H1 (cell line): ENCODE measurements at regions of chr9 and their contacts with region 1.

Region 1: GRCh38 chr9:95127249-95128176 is 190.0 kb downstream of the FANCC start:
- DNase-seq: peak in 1 of 2 experiments; percentile 93
- H3K4me3 ChIP-seq: peak overlapping the region; percentile 12 to 58 (median 40); a peak in 7 of 8 replicates
- H3K27ac ChIP-seq: no peak overlapping the region
- H3K4me1 ChIP-seq: peaks cover 5 to 28% (median 14%) of the 10 kb centered on the region in 4 experiments
- H3K27me3 ChIP-seq: no peaks in the 10 kb centered on the region
- CTCF ChIP-seq: peak; percentile 93 to 99 (median 97)
- EP300 ChIP-seq: no peak
- POLR2A ChIP-seq: no peak
- RAD21 ChIP-seq: peak; percentile 76 to 84

Region 2: DNA sequence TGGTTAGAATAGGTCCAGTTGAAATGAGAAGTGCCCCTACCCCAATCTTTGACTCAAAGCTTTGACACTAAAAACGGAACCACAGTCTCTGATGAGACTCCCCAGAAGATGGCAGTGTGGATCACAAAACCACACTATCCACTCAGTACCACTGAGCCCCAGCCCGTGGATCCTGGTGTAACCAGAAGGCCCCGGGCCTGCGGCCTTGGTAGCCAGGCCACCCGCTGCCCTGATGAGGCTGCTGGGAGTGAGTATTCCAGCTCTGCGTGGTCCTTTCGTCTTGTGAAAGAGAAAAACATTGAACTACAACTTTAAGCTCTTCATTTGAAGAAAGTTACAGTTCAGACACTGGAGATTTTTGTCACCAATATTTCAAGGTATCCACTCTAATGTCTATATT is 446.0 kb before region 1 on chr9:
- CTCF ChIA-PET with region 1: interaction called, 25 read pairs
- POLR2A ChIA-PET with region 1: no interaction called
- DNase-seq: peak; percentile 19 to 63
- H3K4me3 ChIP-seq: no peak overlapping the region
- H3K27ac ChIP-seq: no peak overlapping the region
- H3K4me1 ChIP-seq: no peaks in the 10 kb centered on the region; a peak in 1 of 7 replicates
- H3K27me3 ChIP-seq: no peaks in the 10 kb centered on the region; a peak in 1 of 7 replicates
- CTCF ChIP-seq: peak; percentile 25 to 74 (median 66)
- EP300 ChIP-seq: no peak
- POLR2A ChIP-seq: no peak
- RAD21 ChIP-seq: peak; percentile 82 to 88

Region 3: DNA sequence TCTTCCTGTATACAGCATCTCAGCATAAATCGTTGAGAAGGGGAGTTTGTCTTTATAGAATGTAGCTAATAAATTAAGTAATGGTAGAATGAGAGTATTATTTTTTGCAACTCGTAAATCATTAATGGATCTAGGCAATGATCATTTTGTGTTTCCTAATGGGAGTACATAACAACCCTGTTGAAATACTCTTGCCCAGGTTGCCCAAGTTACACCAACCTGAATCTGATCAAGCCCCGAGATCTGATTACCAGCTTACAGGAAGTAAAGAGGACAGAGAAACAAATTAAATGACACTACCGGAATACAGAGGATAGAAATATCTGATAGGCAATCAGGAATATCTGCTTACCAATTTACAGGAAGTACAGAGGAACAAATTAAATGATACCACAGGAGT is 293.7 kb before region 1 on chr9:
- CTCF ChIA-PET with region 1: no interaction called
- POLR2A ChIA-PET with region 1: no interaction called
- DNase-seq: no peak
- H3K4me3 ChIP-seq: no peak overlapping the region
- H3K27ac ChIP-seq: no peak overlapping the region
- H3K4me1 ChIP-seq: no peaks in the 10 kb centered on the region
- H3K27me3 ChIP-seq: no peaks in the 10 kb centered on the region
- CTCF ChIP-seq: no peak
- EP300 ChIP-seq: no peak
- POLR2A ChIP-seq: no peak
- RAD21 ChIP-seq: no peak

Region 4: DNA sequence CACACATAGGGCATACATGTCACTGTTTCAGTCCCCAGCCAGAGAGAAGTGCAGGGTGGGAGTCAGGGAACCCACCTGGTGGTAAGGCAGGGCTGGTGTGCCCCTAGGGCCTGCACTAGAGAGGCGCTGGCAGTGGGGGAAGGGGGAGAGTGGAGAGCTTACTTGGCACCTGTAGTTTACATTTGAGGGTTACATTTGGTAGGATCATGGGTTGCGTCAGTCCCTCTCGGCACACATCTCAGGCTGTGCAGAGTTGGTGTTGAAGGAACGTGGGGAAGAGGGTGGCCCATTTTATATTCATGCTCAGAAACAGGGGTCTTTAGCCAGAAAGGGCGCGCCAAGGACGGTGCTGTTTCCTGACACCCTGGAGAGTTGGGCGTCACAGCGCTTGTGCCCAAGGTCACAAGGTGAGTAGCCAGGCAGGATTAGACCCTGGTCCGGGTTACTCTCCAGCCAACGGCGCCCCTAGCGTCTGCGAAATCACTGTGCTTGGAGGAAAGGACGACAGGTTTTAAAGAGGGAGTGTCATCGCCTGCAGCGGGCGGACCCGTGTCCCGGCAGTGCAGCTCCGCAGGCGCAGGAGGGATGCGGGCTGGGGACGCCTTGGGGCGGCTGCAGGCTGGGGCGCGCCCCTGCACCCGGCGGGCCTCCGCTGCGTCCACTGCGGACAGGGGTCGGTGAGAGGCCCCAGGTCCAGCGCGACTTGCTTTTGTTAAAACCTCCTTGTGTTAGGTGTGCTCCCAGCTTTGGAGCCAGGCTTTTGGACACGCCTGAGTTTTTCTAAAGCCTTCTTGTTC is 82.6 kb before region 1 on chr9:
- CTCF ChIA-PET with region 1: interaction called, 16 read pairs
- POLR2A ChIA-PET with region 1: interaction called, 3 read pairs
- DNase-seq: peak; percentile 72 to 89
- H3K4me3 ChIP-seq: peak overlapping the region in 3 of 4 experiments; percentile 29 to 52 (median 41); a peak in 5 of 8 replicates
- H3K27ac ChIP-seq: no peak overlapping the region
- H3K4me1 ChIP-seq: peaks cover 6 to 20% (median 12%) of the 10 kb centered on the region in 4 experiments
- H3K27me3 ChIP-seq: peaks cover 0 to 20% (median 8%) of the 10 kb centered on the region in 4 experiments; a peak in 6 of 7 replicates
- CTCF ChIP-seq: peak; percentile 83 to 94 (median 92)
- EP300 ChIP-seq: 0 out of 3 replicates have a peak, but pooled peaks of 1 of the 2 experiments have one; percentile 34
- POLR2A ChIP-seq: no peak
- RAD21 ChIP-seq: peak; percentile 85 to 91

Region 5: GRCh38 chr9:95092262-95093072 is 35.0 kb before region 1 on chr9:
- CTCF ChIA-PET with region 1: interaction called, 209 read pairs
- POLR2A ChIA-PET with region 1: no interaction called
- DNase-seq: no peak
- H3K4me3 ChIP-seq: no peak overlapping the region
- H3K27ac ChIP-seq: no peak overlapping the region
- H3K4me1 ChIP-seq: peaks cover 0 to 12% (median 7%) of the 10 kb centered on the region in 4 experiments
- H3K27me3 ChIP-seq: no peaks in the 10 kb centered on the region
- CTCF ChIP-seq: no peak
- EP300 ChIP-seq: no peak
- POLR2A ChIP-seq: no peak
- RAD21 ChIP-seq: no peak

Region 6: DNA sequence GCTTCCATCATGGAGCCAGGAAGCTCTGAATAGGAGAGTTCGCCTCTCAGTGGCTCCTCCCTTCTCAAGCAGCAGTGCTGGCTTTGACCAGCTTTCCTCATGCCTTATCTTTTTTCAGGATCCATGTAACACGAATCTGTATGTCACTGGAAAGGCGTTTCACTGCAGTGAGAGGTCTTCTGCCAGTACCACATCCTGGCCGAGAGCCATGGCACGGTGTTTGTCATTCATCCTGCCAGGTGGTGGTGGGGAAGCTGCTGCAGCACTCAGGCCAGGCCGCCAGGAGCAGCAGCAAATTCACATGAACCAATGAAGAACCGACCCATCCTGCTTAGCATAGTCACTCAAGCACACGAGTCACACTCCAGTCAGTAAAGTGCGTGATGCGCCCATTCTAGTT is 11.0 kb after region 1 on chr9:
- CTCF ChIA-PET with region 1: interaction called, 26 read pairs
- POLR2A ChIA-PET with region 1: interaction called, 4 read pairs
- DNase-seq: no peak
- H3K4me3 ChIP-seq: no peak overlapping the region
- H3K27ac ChIP-seq: no peak overlapping the region
- H3K4me1 ChIP-seq: no peaks in the 10 kb centered on the region; a peak in 1 of 7 replicates
- H3K27me3 ChIP-seq: no peaks in the 10 kb centered on the region
- CTCF ChIP-seq: peak; percentile 7 to 46 (median 42); a peak in 3 of 4 replicates
- EP300 ChIP-seq: no peak
- POLR2A ChIP-seq: no peak
- RAD21 ChIP-seq: peak in 1 of 2 experiments; percentile 9; a peak in 1 of 4 replicates

Region 7: GRCh38 chr9:95230046-95230445 is 102.5 kb after region 1 on chr9:
- CTCF ChIA-PET with region 1: no interaction called
- POLR2A ChIA-PET with region 1: no interaction called
- DNase-seq: no peak
- H3K4me3 ChIP-seq: no peak overlapping the region
- H3K27ac ChIP-seq: no peak overlapping the region
- H3K4me1 ChIP-seq: peaks cover 0 to 2% (median under 1%) of the 10 kb centered on the region in 4 experiments; a peak in 3 of 7 replicates
- H3K27me3 ChIP-seq: no peaks in the 10 kb centered on the region
- CTCF ChIP-seq: peak in 2 of 3 experiments; percentile 19 to 36; a peak in 2 of 4 replicates
- EP300 ChIP-seq: no peak
- POLR2A ChIP-seq: no peak
- RAD21 ChIP-seq: peak; percentile 6 to 25; a peak in 1 of 4 replicates